ENCODE measurements at regions of chr20 and their contacts with region 1.

Region 1: DNA sequence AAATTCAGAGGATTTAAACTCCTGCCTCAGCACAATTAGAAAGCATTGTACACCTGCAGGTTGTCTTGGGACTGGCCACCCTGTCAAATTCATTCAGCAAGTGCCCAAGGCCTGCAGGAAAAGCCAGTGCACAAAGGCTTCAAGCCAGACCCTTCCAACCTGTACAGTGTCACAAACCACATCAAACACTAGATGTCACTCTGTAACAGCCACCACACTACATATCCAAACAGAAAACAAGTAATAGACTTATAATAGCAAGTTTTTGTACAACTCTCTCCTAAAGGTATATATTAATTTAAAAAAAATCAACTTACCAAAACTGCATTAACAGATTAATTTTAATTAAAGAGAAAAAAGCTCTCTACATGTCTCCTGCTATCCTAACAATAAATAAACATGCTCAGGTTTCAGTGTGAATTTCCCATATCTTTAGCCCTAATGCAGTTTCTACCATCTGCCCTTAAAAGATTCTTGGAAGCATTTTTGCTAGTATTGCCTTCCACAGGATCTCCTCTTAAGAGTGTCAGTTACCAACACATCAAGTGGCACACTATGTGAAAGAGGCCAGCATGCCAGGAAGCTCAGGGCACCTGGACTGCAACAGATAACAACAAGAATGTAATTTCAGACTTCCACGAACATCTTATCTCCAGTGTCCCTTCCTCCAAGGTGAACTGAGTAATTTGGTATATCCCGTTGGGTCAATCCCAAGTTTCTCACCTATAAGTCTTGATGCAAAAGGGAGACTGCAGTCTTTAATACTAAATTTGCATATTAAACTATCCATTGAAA is 47.5 kb downstream of the RALGAPA2 start:
- DNase-seq: peak in 2 of 10 donors; percentile 19 to 65

Region 2: GRCh38 chr20:20568604-20569205 is 96.3 kb before region 1 on chr20:
- intact Hi-C with region 1: no loop called
- DNase-seq: peak in 7 of 10 donors; percentile 16 to 90 (median 56)

Region 3: DNA sequence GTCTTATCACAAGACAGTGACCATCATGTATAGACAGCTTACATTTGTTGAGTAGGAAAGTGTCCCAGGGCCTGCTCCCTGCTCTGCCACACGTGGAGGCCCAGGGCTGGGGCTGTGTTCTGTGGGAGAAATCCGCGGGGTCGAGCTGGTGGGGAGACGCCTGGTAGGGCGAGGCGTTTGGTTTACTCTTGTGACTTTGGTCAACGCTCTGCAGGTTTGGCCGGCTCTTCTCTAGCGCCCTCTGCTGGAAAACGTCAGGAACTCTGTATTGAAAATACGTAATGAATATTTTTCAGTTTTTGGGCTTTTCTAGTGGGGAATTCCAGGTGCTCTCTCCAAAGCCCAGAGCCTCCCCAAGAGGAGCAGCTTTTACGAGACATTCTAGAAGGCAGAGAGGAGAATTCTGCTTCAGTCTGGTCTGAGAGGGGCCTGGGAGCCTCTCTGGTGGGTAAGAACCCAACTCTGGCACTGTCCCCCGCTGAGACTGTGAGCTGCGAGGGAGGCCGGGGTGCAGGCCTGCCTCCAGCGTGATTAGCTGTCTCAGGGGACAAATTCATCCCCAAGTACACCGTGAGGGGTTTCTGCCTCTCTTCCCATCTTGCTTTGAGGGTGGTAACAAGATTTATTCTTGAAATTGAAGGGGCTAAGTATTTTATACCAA is 160.1 kb after region 1 on chr20:
- intact Hi-C with region 1: loop called (anchors 1 kb)
- DNase-seq: peak in 8 of 10 donors; percentile 43 to 91 (median 64)

Region 4: GRCh38 chr20:20956513-20956931 is 291.5 kb after region 1 on chr20:
- intact Hi-C with region 1: no loop called
- DNase-seq: peak in 9 of 10 donors; percentile 8 to 88 (median 29)

Measured in posterior cingulate gyrus (tissue), 11 donors.